PC-9 (cell line): ENCODE measurements at regions of chr22 and their contacts with region 1.

Region 1: GRCh38 chr22:29883045-29883774 is at the start of gene MTMR3:
- DNase-seq: peak; percentile 70 to 94
- H3K4me3 ChIP-seq: peak within 1 kb of the TSS; percentile 97
- H3K27ac ChIP-seq: peak within 1 kb of the TSS; percentile 74
- H3K4me1 ChIP-seq: peaks cover 25% of the 10 kb centered on the region
- H3K27me3 ChIP-seq: no peaks in the 10 kb centered on the region
- CTCF ChIP-seq: peak; percentile 58; the same call in 1 of the 2 replicates
- total RNA-seq, gene MTMR3: 28.1 and 31.1 TPM in 2 replicates

Region 2: GRCh38 chr22:29387921-29388758 is 495.1 kb before region 1 on chr22 and contains the start of gene AP1B1:
- CTCF ChIA-PET with region 1: interaction called, 12 read pairs
- POLR2A ChIA-PET with region 1: no interaction called
- intact Hi-C with region 1: no loop called
- DNase-seq: peak; percentile 88 to 90
- H3K4me3 ChIP-seq: peak within 1 kb of the TSS; percentile 76
- H3K27ac ChIP-seq: 0 out of 2 replicates have a peak within 1 kb of the TSS, but pooled peaks have one; percentile 8
- H3K4me1 ChIP-seq: peaks cover 17% of the 10 kb centered on the region; the same call in 1 of the 2 replicates
- H3K27me3 ChIP-seq: no peaks in the 10 kb centered on the region
- CTCF ChIP-seq: no peak
- total RNA-seq, gene AP1B1: 43.9 and 50.8 TPM in 2 replicates

Region 3: DNA sequence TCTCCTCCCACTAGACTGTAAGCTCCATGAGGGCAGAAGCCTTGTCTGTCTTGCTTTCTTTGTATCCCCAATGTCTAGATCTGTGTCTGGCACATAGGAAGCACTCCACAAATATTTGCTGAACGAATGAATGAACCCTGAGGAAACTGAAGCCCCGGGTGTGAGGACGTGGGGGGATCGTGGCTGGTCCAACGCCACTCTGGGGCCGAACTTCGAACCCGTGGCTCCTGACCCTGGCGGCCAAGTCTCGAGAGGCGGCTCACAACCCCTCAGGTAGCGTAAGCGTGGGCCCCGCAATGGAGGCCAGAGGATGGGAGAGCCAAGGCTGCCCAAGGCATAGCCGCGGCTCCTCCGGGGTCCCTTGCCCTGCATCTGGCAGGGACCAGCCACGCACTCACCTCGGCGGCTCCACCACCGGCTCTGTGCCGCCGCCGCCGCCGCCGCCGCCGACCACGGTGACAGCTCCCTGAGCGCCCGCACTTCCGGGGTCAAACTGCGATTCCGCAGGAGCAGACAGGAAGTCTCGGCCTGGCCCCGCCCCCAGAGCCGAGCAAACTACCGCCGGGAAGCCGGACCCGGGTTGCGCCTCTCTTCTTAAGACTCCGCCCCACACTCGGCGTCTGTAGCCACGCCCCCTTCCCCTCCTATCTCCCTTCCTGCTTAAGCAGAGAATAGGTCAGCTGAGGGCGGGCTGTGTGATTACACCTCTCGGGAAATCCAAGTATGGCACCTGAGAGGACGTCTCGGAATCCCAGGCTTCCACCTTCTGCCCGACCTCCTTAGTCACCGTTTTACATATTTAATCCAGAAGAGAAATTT is 45.2 kb before region 1 on chr22 and contains the start of gene ASCC2:
- CTCF ChIA-PET with region 1: interaction called, 5 read pairs
- POLR2A ChIA-PET with region 1: no interaction called
- intact Hi-C with region 1: loop called (anchors 10 kb)
- DNase-seq: peak; percentile 95
- H3K4me3 ChIP-seq: peak within 1 kb of the TSS; percentile 95
- H3K27ac ChIP-seq: peak within 1 kb of the TSS; percentile 67
- H3K4me1 ChIP-seq: peaks cover 32% of the 10 kb centered on the region
- H3K27me3 ChIP-seq: no peaks in the 10 kb centered on the region
- CTCF ChIP-seq: no peak
- total RNA-seq, gene ASCC2: 39.9 and 43.3 TPM in 2 replicates

Region 4: GRCh38 chr22:29994027-29994715 is 111.0 kb after region 1 on chr22:
- CTCF ChIA-PET with region 1: no interaction called
- POLR2A ChIA-PET with region 1: no interaction called
- intact Hi-C with region 1: loop called (anchors 10 kb)
- DNase-seq: peak in 1 of 2 experiments; percentile 87
- H3K4me3 ChIP-seq: no peak overlapping the region
- H3K27ac ChIP-seq: peak overlapping the region; percentile 94
- H3K4me1 ChIP-seq: peaks cover 42% of the 10 kb centered on the region
- H3K27me3 ChIP-seq: no peaks in the 10 kb centered on the region
- CTCF ChIP-seq: peak; percentile 45; the same call in 1 of the 2 replicates